Caco-2 (cell line): ENCODE measurements at regions of chr13 and their contacts with region 1.

Region 1: DNA sequence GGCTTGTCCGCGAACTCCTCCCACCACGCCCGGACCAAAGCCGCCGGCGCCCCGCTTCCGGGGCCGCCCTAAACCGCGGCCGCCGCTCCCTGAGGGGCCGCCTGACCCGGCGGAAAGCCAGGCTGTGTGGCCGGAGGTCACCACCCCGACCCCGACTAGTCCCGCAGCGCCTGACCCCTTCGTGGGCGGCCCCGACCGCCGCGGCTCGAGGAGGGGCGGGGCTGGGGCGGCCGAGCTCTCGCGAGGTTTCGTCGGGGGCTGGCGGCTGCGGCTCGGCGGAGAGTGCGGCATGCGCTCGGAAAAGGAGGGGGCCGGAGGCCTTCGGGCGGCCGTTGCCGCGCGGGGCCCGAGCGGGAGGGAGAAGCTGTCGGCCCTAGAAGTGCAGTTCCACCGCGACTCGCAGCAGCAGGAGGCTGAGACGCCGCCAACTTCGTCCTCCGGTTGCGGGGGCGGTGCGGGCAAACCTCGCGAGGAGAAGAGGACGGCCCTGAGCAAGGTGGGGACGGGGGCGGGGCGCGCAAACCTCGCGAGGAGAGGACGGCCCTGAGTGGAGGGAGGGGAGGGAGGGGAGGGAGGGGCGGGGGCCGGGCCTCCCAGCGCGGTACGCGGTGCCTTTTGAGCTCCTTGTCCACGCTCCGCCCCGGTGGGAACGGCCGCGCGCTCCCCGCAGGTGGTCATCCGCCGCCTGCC is at the start of gene UPF3A:
- DNase-seq: peak; percentile 95 to 98
- H3K4me3 ChIP-seq: peak within 1 kb of the TSS; percentile 98
- H3K4me3 Mint-ChIP-seq: peak within 1 kb of the TSS; percentile 95
- H3K27ac Mint-ChIP-seq: peak within 1 kb of the TSS; percentile 97
- H3K4me1 ChIP-seq: peaks cover 14% of the 10 kb centered on the region
- H3K4me1 Mint-ChIP-seq: peaks cover 22% of the 10 kb centered on the region
- H3K27me3 ChIP-seq: no peaks in the 10 kb centered on the region
- H3K27me3 Mint-ChIP-seq: no peaks in the 10 kb centered on the region
- CTCF ChIP-seq: no peak
- total RNA-seq, gene UPF3A: 86.2 and 88.3 TPM in 2 replicates

Region 2: DNA sequence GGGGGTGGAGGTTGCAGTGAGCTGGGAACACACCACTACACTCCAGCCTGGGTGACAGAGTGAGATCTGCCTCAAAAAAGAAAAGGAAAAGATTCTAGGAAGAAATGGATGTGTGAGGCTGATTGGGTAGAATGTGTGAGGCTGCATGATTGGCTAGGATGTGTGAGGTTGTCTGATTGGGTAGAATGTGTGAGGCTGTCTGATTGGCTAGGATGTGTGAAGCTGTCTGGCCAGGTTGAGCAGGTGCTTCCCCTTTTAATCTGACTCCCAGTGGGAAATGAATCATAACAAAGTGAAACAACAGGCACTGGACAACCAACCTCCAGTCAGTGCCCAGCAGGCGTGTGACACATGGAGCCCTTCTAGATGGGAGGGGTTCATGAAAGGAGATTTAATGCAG is 322.3 kb before region 1 on chr13:
- CTCF ChIA-PET with region 1: no interaction called
- POLR2A ChIA-PET with region 1: no interaction called
- intact Hi-C with region 1: no loop called
- DNase-seq: no peak
- H3K4me3 ChIP-seq: no peak overlapping the region
- H3K4me3 Mint-ChIP-seq: no peak overlapping the region
- H3K27ac Mint-ChIP-seq: no peak overlapping the region
- H3K4me1 ChIP-seq: no peaks in the 10 kb centered on the region
- H3K4me1 Mint-ChIP-seq: no peaks in the 10 kb centered on the region
- H3K27me3 ChIP-seq: no peaks in the 10 kb centered on the region
- H3K27me3 Mint-ChIP-seq: peaks cover 3% of the 10 kb centered on the region
- CTCF ChIP-seq: no peak

Region 3: GRCh38 chr13:114314074-114314912 is 32.8 kb after region 1 on chr13 and contains the start of gene CHAMP1:
- CTCF ChIA-PET with region 1: no interaction called
- POLR2A ChIA-PET with region 1: interaction called, 4 read pairs
- intact Hi-C with region 1: loop called (anchors 2 kb)
- DNase-seq: peak; percentile 96 to 98
- H3K4me3 ChIP-seq: peak within 1 kb of the TSS; percentile 68
- H3K4me3 Mint-ChIP-seq: peak within 1 kb of the TSS; percentile 88
- H3K27ac Mint-ChIP-seq: peak within 1 kb of the TSS; percentile 87
- H3K4me1 ChIP-seq: peaks cover 4% of the 10 kb centered on the region; the same call in 1 of the 2 replicates
- H3K4me1 Mint-ChIP-seq: peaks cover 22% of the 10 kb centered on the region
- H3K27me3 ChIP-seq: no peaks in the 10 kb centered on the region
- H3K27me3 Mint-ChIP-seq: no peaks in the 10 kb centered on the region
- CTCF ChIP-seq: no peak
- total RNA-seq, gene CHAMP1: 39.6 and 42.1 TPM in 2 replicates